Esophagus muscularis mucosa (tissue), 4 donors: ENCODE measurements at regions of chr16 and their contacts with region 1.

Region 1: DNA sequence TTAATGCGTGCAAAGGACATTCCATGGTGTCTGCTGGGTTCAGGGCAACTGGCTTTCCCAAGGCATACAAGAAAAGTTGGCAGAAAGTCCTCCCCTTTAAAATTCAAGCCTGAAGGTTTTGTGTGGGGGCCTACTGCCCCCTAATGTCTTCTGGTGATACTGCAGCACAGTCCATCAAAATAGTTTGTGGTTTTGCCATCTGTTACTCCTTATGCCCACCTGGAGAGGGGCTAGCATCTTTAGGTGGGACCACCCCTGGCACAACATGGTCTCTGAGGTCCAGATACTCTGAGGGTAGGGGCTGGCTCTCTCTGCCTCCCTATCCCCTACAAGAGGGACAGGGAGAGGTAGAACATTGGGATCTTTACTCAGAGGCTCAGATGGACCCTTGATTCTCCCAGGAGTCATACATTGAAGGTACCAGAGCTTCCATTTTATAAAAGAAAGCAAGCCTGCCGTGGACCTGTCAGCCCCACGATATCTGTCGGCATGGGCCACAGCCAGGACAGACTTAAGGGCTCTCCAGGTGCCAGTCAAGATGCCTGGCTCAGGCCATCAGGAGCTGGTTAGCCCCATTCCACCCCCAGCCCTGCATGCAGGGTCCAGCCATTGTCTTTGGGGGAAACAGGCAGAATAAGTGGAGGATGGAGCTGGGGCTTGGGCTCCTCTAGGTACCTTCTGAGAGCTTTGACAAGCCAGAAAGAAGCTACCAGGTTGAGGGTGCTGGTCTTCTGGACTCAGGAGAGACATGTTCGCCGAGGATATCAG is 6.3 kb downstream of the ESRP2 start:
- DNase-seq: no peak
- H3K4me3 ChIP-seq: no peak overlapping the region
- H3K27ac ChIP-seq: no peak overlapping the region
- H3K4me1 ChIP-seq: peaks cover 8 to 26% (median 13%) of the 10 kb centered on the region in 4 donors
- H3K27me3 ChIP-seq: no peaks in the 10 kb centered on the region
- CTCF ChIP-seq: peak; percentile 89 to 91 (median 89)
- EP300 ChIP-seq: no peak
- POLR2A ChIP-seq: no peak

Region 2: GRCh38 chr16:67993189-67994039 is 236.2 kb before region 1 on chr16:
- intact Hi-C with region 1: loop called (anchors 5 kb)
- DNase-seq: no peak
- H3K4me3 ChIP-seq: peak overlapping the region; percentile 42 to 55 (median 46)
- H3K27ac ChIP-seq: peak overlapping the region; percentile 45 to 60 (median 49)
- H3K4me1 ChIP-seq: peaks cover 10 to 15% (median 13%) of the 10 kb centered on the region in 4 donors
- H3K27me3 ChIP-seq: no peaks in the 10 kb centered on the region
- CTCF ChIP-seq: peak in 2 of 3 experiments; percentile 97 to 99
- EP300 ChIP-seq: no peak
- POLR2A ChIP-seq: peak; percentile 9

Region 3: DNA sequence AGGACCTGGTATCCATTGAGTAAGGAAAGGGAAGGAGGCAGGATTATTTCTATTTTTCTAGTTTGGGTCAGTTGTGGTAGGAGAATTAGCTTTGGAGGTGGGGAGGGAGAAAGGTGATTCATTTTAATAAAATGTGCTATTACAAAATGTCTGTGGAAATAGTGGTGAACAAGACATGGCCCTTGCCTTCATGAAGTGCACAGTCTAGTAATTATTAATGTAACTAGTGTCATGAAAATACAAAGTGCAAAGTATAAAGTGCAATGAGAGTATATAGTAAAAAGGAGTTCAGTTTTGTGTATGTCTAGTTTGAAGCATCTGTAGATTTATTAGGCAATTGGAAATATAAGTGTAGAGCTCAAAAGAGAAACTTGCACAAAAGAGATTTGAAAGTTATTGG is 132.5 kb before region 1 on chr16:
- intact Hi-C with region 1: loop called (anchors 5 kb)
- DNase-seq: no peak
- H3K4me3 ChIP-seq: no peak overlapping the region
- H3K27ac ChIP-seq: no peak overlapping the region
- H3K4me1 ChIP-seq: peaks cover 20 to 55% (median 38%) of the 10 kb centered on the region in 4 donors
- H3K27me3 ChIP-seq: no peaks in the 10 kb centered on the region
- CTCF ChIP-seq: no peak
- EP300 ChIP-seq: no peak
- POLR2A ChIP-seq: no peak